Activated CD8-positive, alpha-beta T cell treated with anti-CD3 and anti-CD28 coated beads, Interleukin-2, amount 10 ng/mL, durations not matched to agents 7 days and 5 days (primary cell): ENCODE measurements at regions of chr7 and their contacts with region 1.

Region 1: DNA sequence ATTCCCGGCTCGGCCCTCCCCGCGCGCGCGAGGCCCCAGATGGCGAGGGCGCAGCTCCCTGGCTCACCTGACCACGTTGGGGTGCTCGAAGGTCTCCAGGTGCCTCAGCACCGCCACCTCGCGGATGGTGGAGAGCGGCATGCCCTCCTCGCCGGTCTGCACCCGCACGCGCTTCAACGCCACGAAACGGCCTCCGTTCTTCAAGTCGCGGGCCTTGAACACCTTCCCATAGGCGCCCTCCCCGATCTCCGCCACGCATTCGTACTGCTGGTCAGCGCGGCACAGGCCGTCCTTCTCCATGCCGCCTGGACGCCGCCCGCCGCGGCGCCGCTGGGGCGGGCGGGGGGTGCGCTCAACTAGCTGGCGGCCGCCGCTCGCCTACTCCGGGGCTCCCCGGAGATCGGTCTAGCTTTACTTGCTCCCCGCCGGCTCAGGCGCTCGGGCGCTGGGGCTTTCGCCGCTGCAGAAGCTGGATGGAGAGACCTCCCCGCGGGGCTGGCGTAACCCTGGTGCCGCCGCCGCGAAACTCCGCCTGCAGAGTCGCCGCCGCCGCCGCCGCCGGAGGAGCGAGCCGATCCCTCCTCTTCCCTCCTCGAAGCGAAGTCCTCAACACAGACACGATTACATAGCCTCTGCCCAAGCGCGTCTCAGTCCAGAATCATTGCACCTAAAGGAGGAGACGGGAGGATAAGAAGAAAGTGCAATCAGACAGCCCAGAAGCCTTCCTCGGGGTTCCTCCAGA is 3.2 kb downstream of the CDK6 start:
- DNase-seq: peak; percentile 93
- ATAC-seq: peak; percentile 75
- H3K4me3 Mint-ChIP-seq: peak overlapping the region; percentile 88
- H3K27ac Mint-ChIP-seq: peak overlapping the region; percentile 86
- H3K4me1 Mint-ChIP-seq: peaks cover 41% of the 10 kb centered on the region
- H3K27me3 Mint-ChIP-seq: peaks cover 7% of the 10 kb centered on the region

Region 2: GRCh38 chr7:92590711-92591310 is 242.4 kb before region 1 on chr7:
- CTCF ChIA-PET with region 1: interaction called, 11 read pairs
- POLR2A ChIA-PET with region 1: interaction called, 3 read pairs
- DNase-seq: no peak
- ATAC-seq: no peak
- H3K4me3 Mint-ChIP-seq: peak overlapping the region; percentile 98
- H3K27ac Mint-ChIP-seq: no peak overlapping the region
- H3K4me1 Mint-ChIP-seq: peaks cover 42% of the 10 kb centered on the region
- H3K27me3 Mint-ChIP-seq: peaks cover 17% of the 10 kb centered on the region

Region 3: GRCh38 chr7:92621026-92621540 is 212.1 kb before region 1 on chr7:
- CTCF ChIA-PET with region 1: interaction called, 131 read pairs
- POLR2A ChIA-PET with region 1: interaction called, 38 read pairs
- DNase-seq: peak; percentile 90
- ATAC-seq: peak; percentile 82
- H3K4me3 Mint-ChIP-seq: peak overlapping the region; percentile 9
- H3K27ac Mint-ChIP-seq: peak overlapping the region; percentile 83
- H3K4me1 Mint-ChIP-seq: peaks cover 54% of the 10 kb centered on the region
- H3K27me3 Mint-ChIP-seq: no peaks in the 10 kb centered on the region

Region 4: DNA sequence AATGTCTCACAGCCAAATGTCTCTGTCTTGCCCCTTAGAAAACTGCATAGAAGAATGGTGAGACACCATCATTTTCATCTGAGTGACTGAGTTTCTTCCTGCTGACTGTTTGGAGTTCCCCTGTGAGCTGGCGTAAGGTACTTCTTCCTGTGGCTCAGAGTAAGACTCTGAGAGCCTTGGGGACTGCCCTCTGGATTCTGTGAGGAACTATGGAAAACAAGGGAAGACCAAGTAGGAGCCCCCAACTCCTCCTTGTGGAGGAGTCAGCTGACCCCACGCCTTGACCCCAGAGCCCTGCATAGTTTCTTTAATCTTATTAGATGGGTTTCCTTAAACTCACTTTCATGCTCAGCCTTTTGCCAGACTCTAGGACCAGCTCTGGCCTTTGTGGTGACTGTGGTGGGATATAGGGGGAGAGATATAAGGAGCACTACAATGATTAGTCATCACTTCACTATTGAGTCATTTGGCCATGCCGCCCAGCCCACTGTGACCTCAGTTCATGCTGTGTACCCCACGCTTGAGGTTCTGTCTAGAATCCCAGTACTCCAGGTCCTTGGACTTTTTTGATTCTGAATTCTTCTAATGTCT is 191.2 kb before region 1 on chr7:
- CTCF ChIA-PET with region 1: interaction called, 10 read pairs
- POLR2A ChIA-PET with region 1: interaction called, 3 read pairs
- DNase-seq: peak; percentile 73
- ATAC-seq: peak; percentile 74
- H3K4me3 Mint-ChIP-seq: peak overlapping the region; percentile 64
- H3K27ac Mint-ChIP-seq: peak overlapping the region; percentile 94
- H3K4me1 Mint-ChIP-seq: peaks cover 91% of the 10 kb centered on the region
- H3K27me3 Mint-ChIP-seq: no peaks in the 10 kb centered on the region

Region 5: GRCh38 chr7:92809397-92810241 is 23.6 kb before region 1 on chr7:
- CTCF ChIA-PET with region 1: interaction called, 150 read pairs
- POLR2A ChIA-PET with region 1: interaction called, 12 read pairs
- DNase-seq: peak; percentile 78
- ATAC-seq: peak; percentile 75
- H3K4me3 Mint-ChIP-seq: peak overlapping the region; percentile 57
- H3K27ac Mint-ChIP-seq: peak overlapping the region; percentile 78
- H3K4me1 Mint-ChIP-seq: peaks cover 70% of the 10 kb centered on the region
- H3K27me3 Mint-ChIP-seq: no peaks in the 10 kb centered on the region

Region 6: DNA sequence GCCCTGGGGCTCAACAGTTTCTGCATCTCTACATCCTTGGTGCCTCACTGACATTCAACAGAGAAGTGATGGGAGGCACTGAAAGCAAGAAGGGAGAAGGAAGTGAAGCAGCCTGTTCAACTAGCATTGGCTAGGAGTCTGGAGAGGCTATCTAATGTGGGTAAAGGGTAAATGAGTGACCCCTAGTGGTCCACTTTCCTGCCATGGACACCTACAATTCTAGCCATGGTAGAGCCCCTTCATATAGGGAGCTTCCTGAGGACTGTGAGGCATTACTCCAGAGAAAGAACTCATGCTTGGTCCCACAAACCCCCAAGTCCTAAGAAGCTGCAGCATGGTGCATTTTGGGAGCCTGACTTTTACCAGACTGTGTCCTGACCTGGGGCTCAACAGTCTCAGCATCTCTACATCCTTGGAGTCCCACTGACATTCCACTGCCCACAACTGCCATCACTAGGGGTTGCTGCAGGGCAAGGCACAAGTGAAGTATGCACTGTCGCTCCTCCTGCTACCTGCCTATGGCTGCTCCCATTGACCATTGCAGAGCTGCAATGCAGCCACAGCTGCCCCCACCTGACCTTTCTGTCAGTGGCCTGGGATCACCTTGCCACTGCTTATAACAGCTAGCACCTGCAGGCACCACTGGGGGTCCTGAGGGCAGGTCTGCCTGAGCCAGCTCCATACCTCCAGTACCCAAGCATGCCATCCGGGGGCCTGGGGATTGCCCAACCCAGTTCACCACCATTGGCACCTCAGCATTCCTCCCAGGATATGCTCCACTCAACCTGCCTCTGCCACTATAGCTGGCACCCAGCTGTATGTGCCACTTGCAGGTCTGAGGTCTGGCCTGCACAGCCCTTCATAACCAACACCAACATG is 47.3 kb after region 1 on chr7:
- CTCF ChIA-PET with region 1: no interaction called
- POLR2A ChIA-PET with region 1: no interaction called
- DNase-seq: no peak
- ATAC-seq: peak; percentile 39
- H3K4me3 Mint-ChIP-seq: no peak overlapping the region
- H3K27ac Mint-ChIP-seq: no peak overlapping the region
- H3K4me1 Mint-ChIP-seq: peaks cover 30% of the 10 kb centered on the region
- H3K27me3 Mint-ChIP-seq: peaks cover 4% of the 10 kb centered on the region